A673 (cell line): ENCODE measurements at regions of chr3 and their contacts with region 1.

Region 1: GRCh38 chr3:8111069-8111798 is 390.4 kb upstream of the LMCD1 start:
- DNase-seq: peak; percentile 92
- H3K4me3 ChIP-seq: no peak overlapping the region
- H3K27ac ChIP-seq: no peak overlapping the region
- H3K4me1 ChIP-seq: peaks cover 10% of the 10 kb centered on the region
- H3K27me3 ChIP-seq: no peaks in the 10 kb centered on the region
- CTCF ChIP-seq: peak; percentile 88

Region 2: DNA sequence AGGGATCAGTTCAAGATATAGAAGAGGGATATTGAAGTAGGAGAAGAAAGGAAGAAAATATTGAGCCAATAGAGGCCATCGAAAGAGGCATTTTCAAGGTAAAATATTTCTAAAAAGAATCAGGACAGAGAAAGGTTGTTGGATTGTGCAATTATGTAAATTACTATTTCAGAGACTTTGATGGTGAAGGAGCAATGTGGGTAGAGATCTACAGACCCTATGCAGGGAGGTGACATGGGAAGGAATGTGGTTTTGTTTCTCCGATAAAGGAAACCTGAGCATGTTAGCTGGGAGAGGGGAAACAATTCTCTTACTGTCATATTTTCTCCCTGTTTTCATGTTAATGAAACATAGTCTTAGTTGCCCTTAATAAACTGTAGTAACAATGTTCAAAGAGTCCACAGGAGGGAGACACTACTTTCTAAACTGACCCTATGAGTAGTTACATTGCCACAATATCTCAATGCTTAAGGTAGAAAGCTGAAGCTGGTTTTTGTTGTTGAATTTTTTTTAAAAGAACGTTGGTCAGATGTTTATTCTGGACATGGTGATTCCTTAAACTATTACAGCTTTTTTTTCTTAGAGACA is 1117.1 kb before region 1 on chr3:
- CTCF ChIA-PET with region 1: no interaction called
- POLR2A ChIA-PET with region 1: no interaction called
- intact Hi-C with region 1: loop called (anchors 5 kb)
- DNase-seq: peak; percentile 25
- H3K4me3 ChIP-seq: no peak overlapping the region
- H3K27ac ChIP-seq: no peak overlapping the region
- H3K4me1 ChIP-seq: no peaks in the 10 kb centered on the region
- H3K27me3 ChIP-seq: no peaks in the 10 kb centered on the region
- CTCF ChIP-seq: peak; percentile 44

Region 3: GRCh38 chr3:7285505-7285904 is 825.7 kb before region 1 on chr3:
- CTCF ChIA-PET with region 1: interaction called, 4 read pairs
- POLR2A ChIA-PET with region 1: no interaction called
- intact Hi-C with region 1: loop called (anchors 10 kb)
- DNase-seq: peak; percentile 47
- H3K4me3 ChIP-seq: no peak overlapping the region
- H3K27ac ChIP-seq: no peak overlapping the region
- H3K4me1 ChIP-seq: no peaks in the 10 kb centered on the region
- H3K27me3 ChIP-seq: no peaks in the 10 kb centered on the region
- CTCF ChIP-seq: peak; percentile 52

Region 4: GRCh38 chr3:7800006-7800780 is 311.0 kb before region 1 on chr3:
- CTCF ChIA-PET with region 1: interaction called, 18 read pairs
- POLR2A ChIA-PET with region 1: no interaction called
- intact Hi-C with region 1: loop called (anchors 5 kb)
- DNase-seq: peak; percentile 52
- H3K4me3 ChIP-seq: no peak overlapping the region
- H3K27ac ChIP-seq: no peak overlapping the region
- H3K4me1 ChIP-seq: no peaks in the 10 kb centered on the region
- H3K27me3 ChIP-seq: no peaks in the 10 kb centered on the region
- CTCF ChIP-seq: peak; percentile 61

Region 5: GRCh38 chr3:8239718-8240695 is 128.8 kb after region 1 on chr3:
- CTCF ChIA-PET with region 1: interaction called, 23 read pairs
- POLR2A ChIA-PET with region 1: no interaction called
- intact Hi-C with region 1: loop called (anchors 5 kb)
- DNase-seq: peak; percentile 79
- H3K4me3 ChIP-seq: no peak overlapping the region
- H3K27ac ChIP-seq: peak overlapping the region; percentile 44
- H3K4me1 ChIP-seq: peaks cover 28% of the 10 kb centered on the region
- H3K27me3 ChIP-seq: no peaks in the 10 kb centered on the region
- CTCF ChIP-seq: peak; percentile 86